ENCODE measurements at regions of chr12 and their contacts with region 1.

Region 1: DNA sequence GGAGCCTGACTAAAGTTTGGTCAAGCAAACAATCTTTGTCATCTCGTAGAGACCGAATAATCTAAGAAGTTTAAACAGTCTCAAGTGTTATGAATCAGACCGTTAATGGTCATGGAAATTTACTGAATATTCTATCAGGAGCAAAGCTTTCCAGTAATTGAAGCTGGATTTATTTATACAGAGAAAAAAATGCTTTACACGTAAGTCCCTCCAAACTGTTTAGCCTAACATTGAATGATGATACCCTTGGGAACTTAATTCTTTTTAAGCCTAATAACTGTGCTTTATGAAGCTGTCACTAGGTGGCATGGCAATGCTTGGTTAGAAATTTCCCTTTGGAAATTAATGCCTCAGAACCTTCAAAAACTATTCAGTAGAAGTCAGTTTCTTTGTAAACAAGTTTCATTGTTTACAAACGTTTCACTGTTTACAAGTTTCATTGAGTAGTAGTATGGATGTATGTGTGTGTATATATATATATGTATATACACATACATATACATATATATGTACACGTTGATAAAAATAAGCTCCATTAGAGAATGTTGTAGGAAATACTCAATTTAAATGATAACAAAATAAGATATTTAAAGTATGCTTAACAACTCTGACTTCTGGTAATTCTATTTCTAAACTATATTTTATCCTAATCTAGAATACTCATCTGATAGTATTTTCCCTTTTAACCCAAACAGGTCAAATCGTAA is 32.1 kb downstream of the DEPDC4 start:
- DNase-seq: peak; percentile 17
- H3K4me3 ChIP-seq: no peak overlapping the region
- H3K27ac ChIP-seq: peak overlapping the region; percentile 39 to 42
- H3K4me1 ChIP-seq: no peaks in the 10 kb centered on the region
- H3K27me3 ChIP-seq: no peaks in the 10 kb centered on the region
- CTCF ChIP-seq: peak in 3 of 4 experiments; percentile 57 to 81 (median 73)
- POLR2A ChIP-seq: no peak

Region 2: GRCh38 chr12:99977550-99977949 is 257.2 kb before region 1 on chr12:
- intact Hi-C with region 1: no loop called
- DNase-seq: no peak
- H3K4me3 ChIP-seq: no peak overlapping the region
- H3K27ac ChIP-seq: no peak overlapping the region
- H3K4me1 ChIP-seq: no peaks in the 10 kb centered on the region
- H3K27me3 ChIP-seq: no peaks in the 10 kb centered on the region
- CTCF ChIP-seq: no peak
- POLR2A ChIP-seq: no peak

Region 3: GRCh38 chr12:100554608-100555077 is 319.9 kb after region 1 on chr12:
- intact Hi-C with region 1: loop called (anchors 2 kb)
- DNase-seq: no peak
- H3K4me3 ChIP-seq: no peak overlapping the region
- H3K27ac ChIP-seq: no peak overlapping the region
- H3K4me1 ChIP-seq: no peaks in the 10 kb centered on the region
- H3K27me3 ChIP-seq: no peaks in the 10 kb centered on the region
- CTCF ChIP-seq: peak; percentile 55 to 85 (median 74)
- POLR2A ChIP-seq: no peak

Region 4: GRCh38 chr12:100608776-100609175 is 374.0 kb after region 1 on chr12:
- intact Hi-C with region 1: no loop called
- DNase-seq: no peak
- H3K4me3 ChIP-seq: no peak overlapping the region
- H3K27ac ChIP-seq: no peak overlapping the region
- H3K4me1 ChIP-seq: no peaks in the 10 kb centered on the region
- H3K27me3 ChIP-seq: no peaks in the 10 kb centered on the region
- CTCF ChIP-seq: no peak
- POLR2A ChIP-seq: no peak

Region 5: GRCh38 chr12:100733817-100734593 is 499.3 kb after region 1 on chr12:
- intact Hi-C with region 1: loop called (anchors 10 kb)
- DNase-seq: no peak
- H3K4me3 ChIP-seq: no peak overlapping the region
- H3K27ac ChIP-seq: no peak overlapping the region
- H3K4me1 ChIP-seq: no peaks in the 10 kb centered on the region
- H3K27me3 ChIP-seq: no peaks in the 10 kb centered on the region
- CTCF ChIP-seq: peak in 3 of 4 experiments; percentile 22 to 50 (median 44)
- POLR2A ChIP-seq: no peak

Measured in prostate gland (tissue), 2 donors.